ENCODE measurements at regions of chr16 and their contacts with region 1.

Region 1: GRCh38 chr16:28140788-28141618 is 70.8 kb downstream of the XPO6 start:
- DNase-seq: peak; percentile 59 to 96 (median 89)
- H3K4me3 ChIP-seq: peak overlapping the region; percentile 55
- H3K4me3 Mint-ChIP-seq: peak overlapping the region; percentile 64 to 91 (median 89)
- H3K27ac ChIP-seq: peak overlapping the region; percentile 75
- H3K27ac Mint-ChIP-seq: peak overlapping the region; percentile 88 to 100 (median 98)
- H3K4me1 ChIP-seq: peaks cover 96% of the 10 kb centered on the region
- H3K4me1 Mint-ChIP-seq: peaks cover 84 to 98% (median 94%) of the 10 kb centered on the region in 3 donors
- H3K27me3 ChIP-seq: no peaks in the 10 kb centered on the region
- H3K27me3 Mint-ChIP-seq: no peaks in the 10 kb centered on the region

Region 2: DNA sequence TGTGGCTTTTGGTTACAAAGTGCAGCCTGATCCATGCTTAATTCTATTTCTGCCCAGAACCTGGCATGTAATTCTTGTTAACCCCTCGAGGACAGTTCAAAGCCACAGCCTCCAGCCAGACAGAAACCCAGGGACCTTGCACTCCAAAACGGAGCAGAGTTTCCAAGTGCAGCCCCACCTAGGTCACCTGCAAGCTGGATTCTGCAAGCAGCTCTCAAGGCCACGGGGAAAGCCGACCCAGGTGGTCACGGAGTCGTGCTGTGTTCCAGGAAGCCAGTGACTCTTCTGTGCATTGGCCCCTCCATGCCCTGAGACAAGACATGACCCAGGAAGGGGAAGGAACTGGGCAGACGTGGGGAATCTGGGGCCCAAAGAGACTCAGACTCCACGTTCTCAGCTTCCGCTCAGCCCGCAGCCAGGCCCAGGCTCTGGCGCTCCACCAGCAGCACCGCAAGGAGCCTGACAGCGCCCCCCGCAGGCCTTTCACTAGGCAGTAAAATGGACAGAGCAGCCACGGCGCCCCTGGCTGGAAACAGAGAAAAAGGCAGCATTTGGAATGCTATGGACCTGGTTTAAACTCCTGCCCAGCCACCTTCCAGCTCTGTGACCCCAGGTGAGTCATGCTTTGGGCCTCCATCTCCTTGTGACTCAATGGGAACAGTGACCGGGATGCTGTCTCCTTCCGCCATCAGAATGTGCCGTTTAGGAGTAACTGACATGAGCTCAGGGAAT is 50.2 kb before region 1 on chr16:
- CTCF ChIA-PET with region 1: no interaction called
- POLR2A ChIA-PET with region 1: no interaction called
- DNase-seq: no peak
- H3K4me3 ChIP-seq: no peak overlapping the region
- H3K4me3 Mint-ChIP-seq: no peak overlapping the region
- H3K27ac ChIP-seq: no peak overlapping the region
- H3K27ac Mint-ChIP-seq: peak overlapping the region in 1 of 8 donors; percentile 41
- H3K4me1 ChIP-seq: no peaks in the 10 kb centered on the region
- H3K4me1 Mint-ChIP-seq: peaks cover 3 to 6% (median 4%) of the 10 kb centered on the region in 3 donors
- H3K27me3 ChIP-seq: no peaks in the 10 kb centered on the region
- H3K27me3 Mint-ChIP-seq: peaks cover 0 to 1% of the 10 kb centered on the region in 2 donors

Region 3: DNA sequence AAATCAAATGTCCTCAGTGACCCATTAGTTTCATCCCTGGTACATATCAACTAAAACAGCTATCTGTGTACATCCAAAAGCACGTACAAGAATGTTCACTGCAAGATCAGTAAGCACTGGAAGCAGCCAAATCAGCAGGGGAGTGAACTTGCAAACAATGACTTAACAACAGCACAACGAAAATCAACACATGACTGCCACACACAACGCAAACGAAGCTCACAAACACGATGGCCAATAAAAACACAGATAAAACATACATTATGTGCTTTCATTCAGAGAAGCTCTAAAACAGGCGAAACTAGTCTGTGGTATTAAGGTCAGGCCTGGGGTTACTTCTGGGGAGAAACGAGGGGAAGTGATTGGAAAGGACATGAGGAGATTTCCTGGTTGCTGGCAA is 10.2 kb after region 1 on chr16:
- CTCF ChIA-PET with region 1: interaction called, 7 read pairs
- POLR2A ChIA-PET with region 1: interaction called, 10 read pairs
- DNase-seq: no peak
- H3K4me3 ChIP-seq: no peak overlapping the region
- H3K4me3 Mint-ChIP-seq: no peak overlapping the region
- H3K27ac ChIP-seq: no peak overlapping the region
- H3K27ac Mint-ChIP-seq: peak overlapping the region; percentile 28 to 90 (median 44)
- H3K4me1 ChIP-seq: peaks cover 54% of the 10 kb centered on the region
- H3K4me1 Mint-ChIP-seq: peaks cover 67 to 77% (median 70%) of the 10 kb centered on the region in 3 donors
- H3K27me3 ChIP-seq: no peaks in the 10 kb centered on the region
- H3K27me3 Mint-ChIP-seq: no peaks in the 10 kb centered on the region

Region 4: DNA sequence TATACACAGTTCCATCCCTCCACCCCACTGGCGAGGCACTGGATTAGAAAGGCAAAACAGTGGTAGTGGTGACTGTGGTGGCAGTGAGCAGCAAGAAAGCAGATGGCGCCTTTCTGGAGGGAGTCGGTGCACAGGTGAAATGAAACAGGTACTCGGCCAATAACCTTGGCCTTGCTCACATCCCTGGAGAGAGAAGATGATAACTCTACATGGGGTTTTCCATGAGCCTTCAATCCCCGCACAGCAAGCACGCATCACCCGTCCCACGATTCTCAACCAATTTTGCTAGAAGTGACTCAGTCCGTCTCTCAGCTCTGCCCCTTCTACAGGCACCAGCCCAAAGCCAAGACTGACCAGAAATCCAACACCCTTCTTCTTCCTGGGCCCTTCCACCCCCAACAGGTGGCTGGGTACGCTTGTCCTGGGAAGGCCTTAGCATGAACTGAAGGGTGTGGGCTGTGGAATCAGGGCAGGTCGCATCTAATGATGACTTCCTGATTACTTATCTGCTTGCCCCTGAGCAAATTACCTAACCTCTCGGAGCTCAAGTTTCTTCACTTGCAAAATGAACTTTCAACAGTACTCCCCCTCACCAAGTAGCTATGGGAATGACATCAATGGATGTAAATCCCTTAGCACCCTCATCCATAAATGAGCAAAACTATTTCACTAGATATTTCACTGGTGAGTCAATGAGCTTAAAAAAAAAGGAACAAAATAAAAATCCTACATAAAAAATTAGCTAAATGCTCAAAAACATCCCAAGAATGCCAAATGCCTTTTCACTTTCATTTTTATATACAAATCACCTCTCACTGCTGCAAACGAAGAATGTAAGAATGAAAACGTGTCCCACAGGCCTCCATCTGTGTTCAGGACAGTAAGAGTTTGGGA is 52.8 kb after region 1 on chr16:
- CTCF ChIA-PET with region 1: interaction called, 13 read pairs
- POLR2A ChIA-PET with region 1: interaction called, 9 read pairs
- DNase-seq: peak in 4 of 5 donors; percentile 13 to 54 (median 21)
- H3K4me3 ChIP-seq: peak overlapping the region; percentile 52
- H3K4me3 Mint-ChIP-seq: peak overlapping the region; percentile 47 to 86 (median 81)
- H3K27ac ChIP-seq: peak overlapping the region; percentile 69
- H3K27ac Mint-ChIP-seq: peak overlapping the region; percentile 97 to 99 (median 98)
- H3K4me1 ChIP-seq: peaks cover 68% of the 10 kb centered on the region
- H3K4me1 Mint-ChIP-seq: peaks cover 78 to 95% (median 82%) of the 10 kb centered on the region in 3 donors
- H3K27me3 ChIP-seq: no peaks in the 10 kb centered on the region
- H3K27me3 Mint-ChIP-seq: peaks cover 0 to under 1% of the 10 kb centered on the region in 2 donors

Region 5: DNA sequence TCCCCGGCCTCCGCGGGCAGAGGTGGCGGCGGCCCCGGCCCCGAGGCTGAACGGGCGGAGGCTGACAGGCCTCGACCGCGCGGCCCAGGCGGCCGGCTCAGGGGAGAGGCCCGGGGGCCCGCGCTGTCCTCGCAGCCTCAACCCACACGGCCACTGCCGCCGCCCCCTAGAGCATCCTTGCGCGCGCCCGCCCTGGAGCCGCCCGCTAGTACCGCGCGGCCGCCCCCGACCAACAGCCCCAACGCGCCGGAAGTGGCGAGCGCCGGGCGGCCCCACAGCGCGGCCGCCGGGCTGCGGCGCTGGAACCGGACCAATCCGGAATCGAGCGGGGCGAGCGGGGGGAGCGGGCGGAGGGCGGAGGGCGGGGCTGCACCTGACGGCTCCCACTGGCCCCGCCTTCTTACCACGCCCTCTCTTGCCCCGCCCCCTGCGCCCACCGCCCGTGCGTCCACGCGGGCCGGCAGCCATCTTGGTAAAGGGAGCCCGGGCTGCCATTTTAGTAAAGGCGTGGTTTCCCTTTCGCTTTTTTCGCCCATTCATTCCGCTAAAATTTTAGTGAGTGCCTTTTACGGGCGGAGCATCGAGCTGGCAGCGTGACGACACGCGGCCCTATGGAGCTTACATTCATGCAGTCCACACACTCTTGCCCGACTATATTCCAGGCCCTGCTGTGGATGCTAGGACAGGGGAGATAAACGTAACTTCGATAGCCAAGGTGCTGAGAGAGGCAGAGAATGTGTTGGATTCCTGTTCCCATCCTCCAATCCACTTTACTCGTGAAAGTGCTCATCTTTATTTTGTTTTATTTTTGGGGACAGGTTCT is 70.9 kb after region 1 on chr16 and contains the start of gene XPO6:
- CTCF ChIA-PET with region 1: interaction called, 200 read pairs
- POLR2A ChIA-PET with region 1: interaction called, 17 read pairs
- DNase-seq: peak; percentile 97 to 99 (median 98)
- H3K4me3 ChIP-seq: peak within 1 kb of the TSS; percentile 66
- H3K4me3 Mint-ChIP-seq: peak within 1 kb of the TSS; percentile 86 to 96 (median 93)
- H3K27ac ChIP-seq: peak within 1 kb of the TSS; percentile 57
- H3K27ac Mint-ChIP-seq: peak within 1 kb of the TSS; percentile 82 to 95 (median 90)
- H3K4me1 ChIP-seq: peaks cover 38% of the 10 kb centered on the region
- H3K4me1 Mint-ChIP-seq: peaks cover 31 to 41% (median 34%) of the 10 kb centered on the region in 3 donors
- H3K27me3 ChIP-seq: no peaks in the 10 kb centered on the region
- H3K27me3 Mint-ChIP-seq: no peaks in the 10 kb centered on the region
- total RNA-seq, gene XPO6: 228 to 234 TPM

Region 6: GRCh38 chr16:28218104-28218503 is 77.1 kb after region 1 on chr16:
- CTCF ChIA-PET with region 1: interaction called, 200 read pairs
- POLR2A ChIA-PET with region 1: interaction called, 11 read pairs
- DNase-seq: peak; percentile 40 to 79 (median 64)
- H3K4me3 ChIP-seq: no peak overlapping the region
- H3K4me3 Mint-ChIP-seq: peak overlapping the region in 1 of 7 donors; percentile 28
- H3K27ac ChIP-seq: no peak overlapping the region
- H3K27ac Mint-ChIP-seq: peak overlapping the region in 3 of 8 donors; percentile 48 to 72 (median 54)
- H3K4me1 ChIP-seq: no peaks in the 10 kb centered on the region
- H3K4me1 Mint-ChIP-seq: peaks cover 4 to 6% (median 5%) of the 10 kb centered on the region in 3 donors
- H3K27me3 ChIP-seq: no peaks in the 10 kb centered on the region
- H3K27me3 Mint-ChIP-seq: no peaks in the 10 kb centered on the region